HEK293 (cell line): ENCODE measurements at regions of chr11 and their contacts with region 1.

Region 1: DNA sequence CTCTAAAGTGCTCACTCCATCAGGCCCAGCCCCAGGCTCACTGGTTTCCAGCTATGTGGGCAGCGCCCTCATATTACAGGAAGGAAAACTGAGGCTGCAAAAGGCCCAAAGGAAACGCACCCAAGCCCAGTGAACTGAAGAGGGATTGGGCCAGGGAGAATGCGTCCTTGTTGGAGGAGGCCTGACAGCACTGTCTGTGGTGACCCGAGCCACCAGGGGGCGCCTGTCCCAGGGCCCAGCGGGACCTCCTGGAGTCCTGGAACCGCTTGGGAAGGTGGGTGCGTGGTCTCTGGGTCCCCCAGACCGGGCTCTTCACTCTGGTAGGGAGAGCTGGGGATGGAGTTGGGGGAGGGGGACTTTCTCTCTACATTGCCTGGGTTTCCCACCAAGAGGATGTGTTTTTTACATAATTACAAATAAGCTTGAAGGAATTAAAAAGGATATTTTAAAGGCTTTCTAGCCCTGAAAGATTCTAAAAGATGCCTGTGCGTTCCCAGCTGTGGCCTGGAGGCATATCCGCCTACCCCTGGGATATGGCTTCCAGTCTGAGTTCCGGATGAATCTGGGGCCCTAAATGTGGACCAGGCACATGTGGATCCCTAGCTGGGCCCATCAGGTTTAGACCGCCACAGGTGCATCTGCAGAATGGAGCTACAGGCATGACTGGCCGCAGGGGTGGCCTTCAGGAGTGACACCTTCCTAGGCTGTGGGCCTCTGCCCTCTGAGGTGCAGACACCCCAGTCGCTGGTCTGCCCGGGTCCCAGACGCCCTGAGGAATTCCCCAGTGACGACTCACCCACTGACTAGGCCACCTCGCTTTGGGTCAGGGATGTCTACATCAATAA is 4.2 kb downstream of the SPI1 start:
- H3K4me3 ChIP-seq: no peak overlapping the region
- H3K27ac ChIP-seq: no peak overlapping the region
- H3K4me1 ChIP-seq: no peaks in the 10 kb centered on the region
- CTCF ChIP-seq: peak; percentile 75

Region 2: GRCh38 chr11:47329987-47330931 is 43.8 kb before region 1 on chr11:
- CTCF ChIA-PET with region 1: no interaction called
- POLR2A ChIA-PET with region 1: no interaction called
- H3K4me3 ChIP-seq: no peak overlapping the region
- H3K27ac ChIP-seq: peak overlapping the region; percentile 43; the same call in 1 of the 2 replicates
- H3K4me1 ChIP-seq: no peaks in the 10 kb centered on the region
- CTCF ChIP-seq: no peak

Region 3: GRCh38 chr11:47361419-47361818 is 12.7 kb before region 1 on chr11:
- CTCF ChIA-PET with region 1: interaction called, 17 read pairs
- POLR2A ChIA-PET with region 1: no interaction called
- H3K4me3 ChIP-seq: no peak overlapping the region
- H3K27ac ChIP-seq: no peak overlapping the region
- H3K4me1 ChIP-seq: no peaks in the 10 kb centered on the region
- CTCF ChIP-seq: no peak

Region 4: DNA sequence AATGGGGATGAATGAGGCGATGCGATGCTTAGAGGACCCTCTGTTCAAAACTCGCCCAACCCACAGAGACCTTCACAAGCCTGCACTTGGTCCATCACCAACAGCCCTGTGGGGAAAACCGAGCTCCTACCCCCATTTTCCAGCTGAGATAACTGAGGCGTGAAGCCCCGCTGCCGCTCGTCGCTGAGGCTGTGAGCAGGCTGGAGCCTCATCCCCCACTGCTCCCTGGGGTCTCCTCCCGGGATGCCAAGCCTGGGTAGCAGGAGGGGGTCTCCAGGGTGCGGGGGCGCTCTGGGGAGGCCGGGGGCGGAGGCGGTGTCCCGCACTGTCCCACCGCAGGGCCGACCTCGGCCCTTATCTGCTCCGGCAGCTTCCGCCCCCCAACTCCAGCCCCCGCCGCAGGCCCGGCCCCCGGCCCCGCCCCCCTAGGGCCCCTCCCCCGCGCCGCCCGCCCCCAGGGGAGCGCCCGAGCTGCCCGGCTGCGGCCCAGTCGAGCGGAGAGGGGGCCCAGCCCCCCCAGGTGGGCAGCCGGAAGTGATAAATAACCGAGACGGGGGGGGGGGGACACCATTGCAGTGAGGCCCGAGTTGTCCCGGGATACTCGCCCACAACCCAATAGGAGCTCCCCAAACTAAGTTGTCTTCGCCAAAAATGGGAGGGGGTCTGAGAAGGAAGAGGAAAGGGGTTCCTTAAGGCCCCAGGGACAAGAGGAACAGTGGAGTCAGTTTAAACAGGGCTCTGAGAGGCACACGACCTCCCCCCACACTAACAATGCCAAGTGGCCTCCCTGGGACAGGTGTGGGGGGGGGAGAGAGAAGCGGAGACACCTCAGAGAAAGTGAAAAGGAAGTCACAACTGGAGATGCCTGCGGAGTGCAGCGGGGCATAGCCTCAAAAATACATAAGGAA is 26.0 kb after region 1 on chr11:
- CTCF ChIA-PET with region 1: interaction called, 32 read pairs
- POLR2A ChIA-PET with region 1: no interaction called
- H3K4me3 ChIP-seq: peak overlapping the region; percentile 26
- H3K27ac ChIP-seq: peak overlapping the region; percentile 49; the same call in 1 of the 2 replicates
- H3K4me1 ChIP-seq: no peaks in the 10 kb centered on the region; the same call in 1 of the 2 replicates
- CTCF ChIP-seq: no peak

Region 5: GRCh38 chr11:47426061-47426956 is 52.2 kb after region 1 on chr11 and contains the start of gene PSMC3:
- CTCF ChIA-PET with region 1: no interaction called
- POLR2A ChIA-PET with region 1: no interaction called
- H3K4me3 ChIP-seq: peak within 1 kb of the TSS; percentile 100
- H3K27ac ChIP-seq: peak within 1 kb of the TSS; percentile 73
- H3K4me1 ChIP-seq: 0 out of 2 replicates have a peak, but pooled peaks cover 3% of the 10 kb centered on the region
- CTCF ChIP-seq: no peak

Region 6: GRCh38 chr11:47454180-47454644 is 80.1 kb after region 1 on chr11:
- CTCF ChIA-PET with region 1: interaction called, 36 read pairs
- POLR2A ChIA-PET with region 1: no interaction called
- H3K4me3 ChIP-seq: no peak overlapping the region
- H3K27ac ChIP-seq: no peak overlapping the region
- H3K4me1 ChIP-seq: no peaks in the 10 kb centered on the region
- CTCF ChIP-seq: peak; percentile 79